H1 (cell line): ENCODE measurements at regions of chr9 and their contacts with region 1.

Region 1: GRCh38 chr9:33816327-33817252 is at the start of gene UBE2R2:
- DNase-seq: peak; percentile 60 to 86
- H3K4me3 ChIP-seq: peak within 1 kb of the TSS; percentile 85 to 97 (median 92)
- H3K27ac ChIP-seq: peak within 1 kb of the TSS; percentile 97
- H3K4me1 ChIP-seq: peaks cover 0 to 8% (median 5%) of the 10 kb centered on the region in 4 experiments; a peak in 6 of 7 replicates
- H3K27me3 ChIP-seq: no peaks in the 10 kb centered on the region
- CTCF ChIP-seq: no peak
- EP300 ChIP-seq: no peak
- POLR2A ChIP-seq: peak; percentile 68 to 86
- RAD21 ChIP-seq: no peak
- total RNA-seq, gene UBE2R2: 42.1 and 42.4 TPM in 2 replicates

Region 2: DNA sequence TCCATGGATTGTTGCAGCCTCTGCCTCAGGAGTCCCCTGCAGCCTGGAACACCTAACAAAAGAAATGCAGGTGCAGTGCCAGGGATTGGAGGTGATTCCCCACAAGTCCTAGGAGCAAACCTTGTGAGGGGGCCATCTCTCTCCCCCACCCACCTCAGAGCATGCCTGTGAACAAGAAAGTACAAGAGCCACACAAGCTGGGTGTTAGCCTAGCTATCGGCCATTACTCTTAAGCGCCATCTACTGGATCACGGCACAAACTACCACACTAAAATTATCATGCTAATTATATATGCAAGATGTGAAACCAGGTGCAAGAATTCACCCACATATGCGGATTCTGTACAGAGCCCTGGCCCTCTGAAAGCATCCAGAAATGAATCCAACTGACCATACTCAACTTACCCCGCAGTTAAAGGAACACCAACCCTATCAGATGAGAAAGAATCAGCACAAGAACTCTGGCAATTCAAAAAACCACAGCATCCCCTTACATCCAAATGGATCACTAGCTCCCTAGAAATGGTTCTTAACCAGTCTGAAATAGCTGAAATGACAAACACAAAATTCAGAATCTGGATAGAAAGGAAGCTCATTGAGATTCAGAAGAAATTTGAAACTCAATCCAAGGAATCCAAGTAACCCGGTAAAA is 37.8 kb before region 1 on chr9:
- CTCF ChIA-PET with region 1: interaction called, 16 read pairs
- POLR2A ChIA-PET with region 1: no interaction called
- DNase-seq: peak; percentile 25 to 58
- H3K4me3 ChIP-seq: no peak overlapping the region
- H3K27ac ChIP-seq: no peak overlapping the region
- H3K4me1 ChIP-seq: no peaks in the 10 kb centered on the region
- H3K27me3 ChIP-seq: no peaks in the 10 kb centered on the region
- CTCF ChIP-seq: peak in 2 of 3 experiments; percentile 77 to 81; a peak in 3 of 4 replicates
- EP300 ChIP-seq: no peak
- POLR2A ChIP-seq: no peak
- RAD21 ChIP-seq: peak; percentile 50 to 64

Region 3: GRCh38 chr9:33791117-33791516 is 25.5 kb before region 1 on chr9:
- CTCF ChIA-PET with region 1: interaction called, 20 read pairs
- POLR2A ChIA-PET with region 1: interaction called, 3 read pairs
- DNase-seq: no peak
- H3K4me3 ChIP-seq: no peak overlapping the region
- H3K27ac ChIP-seq: no peak overlapping the region
- H3K4me1 ChIP-seq: peaks cover 0 to 5% (median 3%) of the 10 kb centered on the region in 4 experiments; a peak in 4 of 7 replicates
- H3K27me3 ChIP-seq: no peaks in the 10 kb centered on the region
- CTCF ChIP-seq: no peak
- EP300 ChIP-seq: no peak
- POLR2A ChIP-seq: no peak
- RAD21 ChIP-seq: no peak

Region 4: DNA sequence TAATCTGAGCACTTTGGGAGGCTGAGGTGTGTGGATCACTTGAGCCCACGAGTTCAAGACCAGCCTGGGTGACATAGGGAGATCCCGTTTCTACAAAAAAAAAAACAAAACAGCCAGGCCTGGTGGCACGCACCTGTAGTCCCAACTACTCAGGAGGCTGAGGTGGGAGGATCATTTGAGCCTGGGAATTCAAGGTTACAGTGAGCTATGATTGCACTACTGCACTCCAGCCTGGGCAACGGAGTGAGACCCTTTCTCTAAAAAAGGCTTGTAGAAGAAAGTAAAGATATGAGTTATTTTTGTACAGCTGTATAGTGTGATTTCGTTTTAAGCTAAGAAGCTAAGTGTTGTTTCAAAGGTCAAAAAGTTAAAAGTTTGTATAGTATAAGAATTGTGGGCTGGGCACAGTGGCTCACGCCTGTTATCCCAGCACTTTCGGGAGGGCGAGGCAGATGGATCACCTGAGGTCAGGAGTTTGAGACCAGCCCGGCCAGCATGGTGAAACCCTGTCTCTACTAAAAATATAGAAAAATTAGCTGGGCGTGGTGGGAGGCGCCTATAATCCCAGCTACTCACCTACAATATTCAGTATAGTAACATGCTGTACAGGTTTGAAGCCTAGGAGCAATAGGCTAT is 19.2 kb after region 1 on chr9:
- CTCF ChIA-PET with region 1: interaction called, 16 read pairs
- POLR2A ChIA-PET with region 1: interaction called, 6 read pairs
- DNase-seq: no peak
- H3K4me3 ChIP-seq: no peak overlapping the region
- H3K27ac ChIP-seq: no peak overlapping the region
- H3K4me1 ChIP-seq: no peaks in the 10 kb centered on the region
- H3K27me3 ChIP-seq: no peaks in the 10 kb centered on the region
- CTCF ChIP-seq: no peak
- EP300 ChIP-seq: no peak
- POLR2A ChIP-seq: no peak
- RAD21 ChIP-seq: no peak

Region 5: DNA sequence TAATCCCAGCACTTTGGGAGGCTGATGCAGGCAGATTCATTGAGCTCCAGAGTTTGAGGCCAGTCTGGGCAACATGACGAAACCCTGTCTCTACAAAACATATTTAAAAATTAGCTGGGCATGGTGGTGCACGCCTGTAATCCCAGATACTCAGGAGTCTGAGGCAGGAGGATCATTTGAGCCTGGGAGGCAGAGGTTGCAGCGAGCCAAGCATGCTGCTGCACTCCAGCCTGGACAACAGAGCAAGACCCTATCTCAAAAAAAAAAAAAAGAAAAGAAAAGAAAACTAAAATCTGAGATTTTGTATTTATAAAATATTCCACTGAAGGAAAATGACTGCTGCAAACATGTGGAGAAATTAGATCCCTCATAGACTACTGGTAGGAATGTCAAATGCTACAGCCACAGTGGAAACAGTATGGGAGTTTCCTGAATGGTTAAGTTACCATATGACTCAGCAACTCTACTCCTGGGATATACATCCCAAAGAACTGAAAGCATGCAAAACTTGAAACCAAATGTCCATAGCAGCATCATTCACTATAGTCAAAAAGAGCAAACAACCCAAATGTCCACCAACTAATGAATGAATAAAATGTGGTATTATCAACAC is 126.0 kb after region 1 on chr9:
- CTCF ChIA-PET with region 1: no interaction called
- POLR2A ChIA-PET with region 1: no interaction called
- DNase-seq: no peak
- H3K4me3 ChIP-seq: no peak overlapping the region
- H3K27ac ChIP-seq: no peak overlapping the region
- H3K4me1 ChIP-seq: no peaks in the 10 kb centered on the region
- H3K27me3 ChIP-seq: no peaks in the 10 kb centered on the region
- CTCF ChIP-seq: no peak
- EP300 ChIP-seq: no peak
- POLR2A ChIP-seq: no peak
- RAD21 ChIP-seq: no peak